Activated naive CD4-positive, alpha-beta T cell treated with anti-CD3 and anti-CD28 coated beads, Interleukin-2, amount 10 ng/mL, durations not matched to agents 7 days and 5 days (primary cell): ENCODE measurements at regions of chr15 and their contacts with region 1.

Region 1: DNA sequence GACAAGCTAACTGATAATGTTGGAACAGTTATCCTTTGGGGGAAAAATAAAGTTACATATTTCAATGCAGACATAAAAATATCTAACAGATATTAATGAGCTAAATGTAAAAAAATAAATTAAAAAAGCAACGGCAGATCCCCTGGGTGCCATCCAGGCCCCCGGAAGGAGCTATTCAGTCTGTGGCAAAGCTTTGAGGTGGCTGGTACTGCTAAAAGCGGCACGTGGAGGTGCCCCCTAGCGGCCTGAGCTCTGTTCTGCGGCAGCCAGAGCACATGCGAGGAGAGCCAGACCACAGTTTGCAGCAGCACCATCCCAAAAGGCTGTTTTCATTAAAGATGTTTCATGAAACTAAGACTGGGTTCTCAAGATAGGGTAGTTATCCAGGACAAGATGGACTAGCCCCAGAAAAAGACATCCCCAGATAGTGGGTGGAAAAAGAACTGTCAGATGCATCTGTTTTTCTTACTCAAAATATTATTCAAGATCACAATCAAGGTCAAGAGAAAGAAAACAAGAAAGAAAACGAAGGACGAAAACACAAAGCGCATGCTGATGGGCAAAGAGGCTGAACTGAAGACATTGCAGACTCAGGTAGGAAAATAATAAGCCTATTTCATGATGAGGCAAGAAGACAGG is 18.7 kb downstream of the AP3S2 start:
- DNase-seq: peak; percentile 88
- H3K4me3 Mint-ChIP-seq: no peak overlapping the region
- H3K27ac Mint-ChIP-seq: no peak overlapping the region
- H3K4me1 Mint-ChIP-seq: peaks cover 6% of the 10 kb centered on the region
- H3K27me3 Mint-ChIP-seq: no peaks in the 10 kb centered on the region

Region 2: GRCh38 chr15:89740137-89740536 is 134.9 kb before region 1 on chr15:
- CTCF ChIA-PET with region 1: interaction called, 28 read pairs
- DNase-seq: peak; percentile 70
- H3K4me3 Mint-ChIP-seq: no peak overlapping the region
- H3K27ac Mint-ChIP-seq: no peak overlapping the region
- H3K4me1 Mint-ChIP-seq: peaks cover 2% of the 10 kb centered on the region
- H3K27me3 Mint-ChIP-seq: peaks cover 42% of the 10 kb centered on the region

Region 3: DNA sequence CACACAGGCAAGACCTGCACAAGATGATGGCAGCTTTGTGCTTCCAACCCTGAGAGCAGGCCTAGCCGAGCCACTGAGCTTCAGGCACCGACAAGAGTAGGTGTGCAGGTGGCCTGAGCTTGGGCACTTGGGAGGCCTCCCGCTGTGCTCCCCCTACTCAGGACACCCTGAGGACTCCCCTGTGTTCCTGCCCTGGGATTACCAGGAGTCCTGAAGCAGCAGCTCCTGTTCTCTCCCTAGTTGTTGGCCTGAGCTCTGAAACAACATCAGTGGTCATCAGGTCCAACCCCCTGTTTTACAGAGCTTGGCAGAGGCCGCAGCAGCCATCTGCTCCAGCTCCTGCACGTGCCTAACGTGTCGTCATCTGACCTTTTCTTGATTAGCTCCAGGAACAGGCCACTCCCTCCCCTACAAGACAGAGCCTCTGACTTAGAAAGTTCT is 107.0 kb before region 1 on chr15:
- CTCF ChIA-PET with region 1: interaction called, 120 read pairs
- DNase-seq: no peak
- H3K4me3 Mint-ChIP-seq: no peak overlapping the region
- H3K27ac Mint-ChIP-seq: no peak overlapping the region
- H3K4me1 Mint-ChIP-seq: no peaks in the 10 kb centered on the region
- H3K27me3 Mint-ChIP-seq: peaks cover 13% of the 10 kb centered on the region

Region 4: DNA sequence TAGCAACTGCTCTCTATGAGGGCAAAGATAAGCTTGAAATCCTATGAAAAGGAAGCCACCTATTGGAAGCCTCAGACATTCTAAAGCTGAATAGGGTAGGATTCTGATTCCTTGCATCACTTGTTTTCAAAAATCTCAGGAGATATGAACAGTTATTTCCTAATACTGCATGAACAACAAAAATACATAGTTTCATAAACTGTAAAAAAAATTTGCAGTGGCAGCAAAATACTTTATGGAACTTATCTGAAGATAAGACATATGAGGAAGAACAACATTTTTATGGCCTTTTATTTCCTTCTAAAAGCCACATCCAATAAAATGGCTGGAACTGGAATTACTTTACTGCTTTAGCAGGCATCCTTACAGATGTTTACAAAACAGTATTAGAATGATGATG is 11.1 kb before region 1 on chr15:
- CTCF ChIA-PET with region 1: interaction called, 16 read pairs
- DNase-seq: no peak
- H3K4me3 Mint-ChIP-seq: no peak overlapping the region
- H3K27ac Mint-ChIP-seq: no peak overlapping the region
- H3K4me1 Mint-ChIP-seq: peaks cover 9% of the 10 kb centered on the region
- H3K27me3 Mint-ChIP-seq: no peaks in the 10 kb centered on the region

Region 5: GRCh38 chr15:89893696-89894455 is 18.8 kb after region 1 on chr15 and contains the start of gene AP3S2:
- CTCF ChIA-PET with region 1: interaction called, 22 read pairs
- DNase-seq: peak; percentile 90
- H3K4me3 Mint-ChIP-seq: peak within 1 kb of the TSS; percentile 93
- H3K27ac Mint-ChIP-seq: peak within 1 kb of the TSS; percentile 87
- H3K4me1 Mint-ChIP-seq: peaks cover 45% of the 10 kb centered on the region
- H3K27me3 Mint-ChIP-seq: peaks cover 8% of the 10 kb centered on the region